Psoas muscle (tissue), 8 donors: ENCODE measurements at regions of chr3 and their contacts with region 1.

Region 1: DNA sequence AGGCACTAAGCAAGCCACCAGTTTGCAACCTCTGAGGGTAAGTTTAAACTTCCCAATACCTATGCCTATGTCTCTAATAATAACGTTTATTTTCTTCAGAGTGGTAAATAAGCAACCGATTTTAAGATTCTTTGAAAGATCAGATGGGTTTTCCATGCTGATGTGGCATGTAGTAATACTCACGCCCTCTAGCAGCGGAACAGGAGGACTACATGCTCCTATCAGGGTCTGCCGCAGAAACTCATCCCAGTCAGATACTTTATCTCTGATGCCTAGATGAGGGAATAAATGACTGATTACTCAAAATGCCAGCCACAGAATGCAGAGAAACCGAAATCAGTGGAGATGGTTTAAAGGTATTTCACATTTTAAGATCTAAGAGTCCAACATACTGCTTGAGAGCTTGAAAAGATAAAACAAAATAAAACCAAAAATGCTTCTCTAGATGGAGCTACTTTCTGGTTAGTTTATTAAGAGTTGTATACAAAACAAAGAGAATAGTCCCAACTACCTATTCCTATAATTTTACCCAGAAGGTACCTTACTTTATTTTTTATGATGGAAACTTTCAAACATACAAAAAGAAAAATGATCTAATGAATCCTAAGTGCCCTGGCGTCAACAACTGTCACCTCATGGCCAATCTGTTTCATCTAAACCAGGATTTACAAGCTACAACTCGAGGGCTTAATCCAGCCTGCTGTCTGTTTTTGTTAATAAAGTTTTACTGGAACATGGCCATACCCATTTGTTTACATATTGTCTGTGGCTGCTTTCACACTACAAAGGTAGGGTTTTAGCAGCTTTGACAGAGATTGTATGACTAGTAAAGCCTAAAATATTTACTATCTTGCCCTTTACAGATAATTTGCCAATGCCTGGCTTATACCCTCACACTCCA is 37.5 kb upstream of the STIMATE start:
- DNase-seq: peak in 1 of 2 donors; percentile 24
- ATAC-seq: peak; percentile 71 to 95 (median 82)
- H3K4me3 ChIP-seq: no peak overlapping the region
- H3K27ac ChIP-seq: no peak overlapping the region
- H3K4me1 ChIP-seq: peaks cover 4% of the 10 kb centered on the region
- H3K27me3 ChIP-seq: no peaks in the 10 kb centered on the region
- CTCF ChIP-seq: peak; percentile 79

Region 2: DNA sequence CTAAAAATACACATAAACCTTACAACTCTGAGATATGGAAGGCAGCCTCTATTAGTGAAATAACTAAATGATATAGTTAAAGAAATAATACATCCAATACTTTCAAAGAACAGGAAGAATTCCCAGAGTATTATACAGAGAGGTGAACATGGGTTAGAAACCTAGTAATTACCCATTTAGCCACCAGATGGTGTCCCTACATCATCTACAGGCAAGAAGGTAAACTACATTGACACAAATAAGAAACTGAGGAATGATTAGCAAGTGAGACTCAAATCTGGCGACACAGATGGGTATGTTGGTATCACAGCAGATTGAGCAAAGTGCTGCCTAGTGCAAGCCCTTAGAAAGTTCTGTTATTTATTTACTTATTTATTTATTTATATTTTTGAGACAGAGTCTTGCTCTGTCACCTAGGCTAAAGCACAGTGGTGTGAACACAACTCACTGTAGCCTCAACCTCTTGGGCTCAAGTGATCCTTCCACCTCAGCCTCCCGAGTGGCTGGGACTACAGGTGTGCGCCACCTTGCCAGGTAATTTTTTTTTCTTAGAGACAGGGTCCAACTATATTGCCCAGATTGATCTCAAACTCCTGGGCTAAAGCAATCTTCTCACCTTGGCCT is 192.3 kb before region 1 on chr3:
- intact Hi-C with region 1: loop called in 1 of 2 experiments (anchors 2 kb)
- DNase-seq: no peak
- ATAC-seq: peak in 2 of 4 donors; percentile 53 to 74
- H3K4me3 ChIP-seq: no peak overlapping the region
- H3K27ac ChIP-seq: no peak overlapping the region
- H3K4me1 ChIP-seq: no peaks in the 10 kb centered on the region
- H3K27me3 ChIP-seq: no peaks in the 10 kb centered on the region
- CTCF ChIP-seq: peak; percentile 65

Region 3: GRCh38 chr3:52978109-52978754 is 43.4 kb after region 1 on chr3:
- intact Hi-C with region 1: loop called in 1 of 2 experiments (anchors 5 kb)
- DNase-seq: no peak
- ATAC-seq: peak; percentile 91 to 97 (median 96)
- H3K4me3 ChIP-seq: peak overlapping the region; percentile 47
- H3K27ac ChIP-seq: peak overlapping the region; percentile 90
- H3K4me1 ChIP-seq: peaks cover 17% of the 10 kb centered on the region
- H3K27me3 ChIP-seq: no peaks in the 10 kb centered on the region
- CTCF ChIP-seq: no peak

Region 4: DNA sequence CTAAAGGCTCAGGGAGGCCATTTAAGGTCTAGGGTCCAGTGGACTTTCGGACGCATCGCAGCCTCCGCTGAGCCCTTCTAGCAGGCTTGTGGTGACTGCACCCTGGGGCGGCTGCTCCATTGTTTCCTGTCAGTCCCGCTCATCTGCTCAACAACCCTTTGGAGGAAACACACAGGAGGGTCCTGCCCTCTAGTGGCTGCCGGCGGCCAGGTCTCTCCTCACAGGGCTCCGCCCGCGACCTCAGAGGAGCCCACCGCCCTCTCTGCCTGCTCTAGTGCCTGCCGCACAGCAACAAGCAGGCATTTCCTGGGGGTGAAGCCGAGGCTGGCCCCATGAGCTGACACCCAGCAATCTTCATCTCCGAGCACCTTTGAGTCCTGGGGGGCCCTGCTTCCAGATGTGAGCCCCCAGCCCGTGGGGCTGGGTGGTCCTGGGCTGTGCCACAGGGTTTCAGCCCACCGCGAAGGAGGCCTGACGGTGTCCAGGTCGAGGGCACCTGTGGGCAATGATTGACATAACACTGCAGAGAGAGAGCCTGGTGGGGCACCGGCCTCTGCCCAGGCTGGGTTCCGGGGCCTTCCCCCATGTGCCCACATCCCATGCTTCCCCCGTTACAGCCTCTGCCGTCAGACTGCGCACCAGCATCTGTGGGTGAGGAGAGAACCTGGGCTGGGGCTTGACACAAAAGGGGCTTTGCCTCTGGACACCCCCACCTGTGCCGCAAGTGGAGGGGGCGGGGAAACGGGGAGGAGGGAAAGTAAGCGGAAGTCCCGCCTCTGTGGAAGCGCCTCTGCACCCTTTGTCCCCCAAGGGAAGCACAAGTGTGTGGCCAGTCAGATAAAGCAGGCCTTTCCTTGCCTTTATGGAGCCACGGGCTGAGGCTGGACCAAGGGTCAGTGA is 138.0 kb after region 1 on chr3:
- intact Hi-C with region 1: loop called (anchors 2 kb)
- DNase-seq: peak; percentile 85 to 89
- ATAC-seq: peak; percentile 91 to 97 (median 94)
- H3K4me3 ChIP-seq: peak overlapping the region; percentile 81
- H3K27ac ChIP-seq: peak overlapping the region; percentile 50
- H3K4me1 ChIP-seq: peaks cover 13% of the 10 kb centered on the region
- H3K27me3 ChIP-seq: no peaks in the 10 kb centered on the region
- CTCF ChIP-seq: peak; percentile 90